ENCODE measurements at regions of chr11 and their contacts with region 1.

Region 1: DNA sequence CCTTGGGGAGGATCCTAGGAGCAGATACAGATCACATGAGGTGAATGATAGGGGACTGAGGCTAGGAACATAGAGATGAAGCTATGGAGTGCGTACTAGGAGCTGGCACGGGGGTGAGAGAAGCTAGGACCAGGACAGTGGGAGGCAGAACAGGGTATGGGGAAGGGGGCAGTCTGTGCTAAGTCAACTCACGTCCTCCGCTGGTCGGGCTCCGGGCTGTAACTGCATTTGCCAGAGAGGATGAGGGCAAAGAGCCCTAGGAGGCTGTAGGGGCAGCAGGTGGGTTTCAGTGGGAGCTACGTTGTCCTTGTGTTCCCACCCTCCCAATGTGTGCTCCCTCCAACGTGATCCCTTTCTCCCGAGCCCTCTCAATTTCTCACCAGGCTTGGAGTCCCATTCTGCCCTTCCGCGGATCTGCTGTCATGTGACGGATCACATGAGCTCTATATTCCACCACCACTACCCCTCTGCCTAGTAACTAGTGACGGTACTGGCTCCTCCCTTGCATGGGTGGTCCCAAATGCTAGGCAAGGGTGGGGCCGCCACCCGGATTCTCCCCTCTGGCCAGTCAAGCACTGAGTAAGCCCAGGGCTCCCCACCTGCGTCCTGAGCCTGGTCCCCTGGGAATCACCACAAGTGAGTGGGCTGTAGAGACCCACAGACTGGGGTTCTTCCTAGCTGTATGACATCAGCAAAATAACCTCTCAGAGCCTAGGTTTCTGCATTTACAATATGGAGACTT is at the start of gene TPP1:
- DNase-seq: peak; percentile 89 to 95 (median 90)
- H3K4me3 ChIP-seq: peak within 1 kb of the TSS; percentile 68
- H3K27ac ChIP-seq: peak within 1 kb of the TSS; percentile 54 to 55
- H3K4me1 ChIP-seq: peaks cover 4% of the 10 kb centered on the region
- H3K27me3 ChIP-seq: no peaks in the 10 kb centered on the region
- CTCF ChIP-seq: no peak
- EP300 ChIP-seq: no peak
- POLR2A ChIP-seq: peak; percentile 47
- total RNA-seq, gene TPP1: 21.0 to 71.8 (median 58.2) TPM

Region 2: DNA sequence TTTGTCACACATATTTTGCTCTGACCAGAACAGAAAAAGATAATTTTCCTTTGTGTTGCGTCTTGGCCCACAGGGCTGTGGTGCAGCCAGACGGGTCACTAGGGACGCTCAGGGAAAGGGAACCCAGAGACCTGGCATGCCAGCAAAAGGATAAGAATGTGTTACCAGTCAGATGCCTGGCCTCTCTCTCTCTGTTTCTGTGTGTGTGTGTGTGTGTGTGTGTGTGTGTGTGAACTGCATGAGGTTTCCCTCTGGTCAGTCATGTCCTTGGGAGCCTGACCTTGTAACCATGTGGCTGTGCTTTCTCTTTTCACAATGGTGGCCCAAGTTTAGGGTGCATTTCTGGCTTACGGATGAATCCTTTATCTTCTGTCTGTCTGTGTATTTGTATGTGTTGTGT is 334.2 kb before region 1 on chr11:
- intact Hi-C with region 1: no loop called
- DNase-seq: no peak
- H3K4me3 ChIP-seq: no peak overlapping the region
- H3K27ac ChIP-seq: no peak overlapping the region
- H3K4me1 ChIP-seq: no peaks in the 10 kb centered on the region
- H3K27me3 ChIP-seq: no peaks in the 10 kb centered on the region
- CTCF ChIP-seq: no peak
- EP300 ChIP-seq: no peak
- POLR2A ChIP-seq: no peak

Region 3: DNA sequence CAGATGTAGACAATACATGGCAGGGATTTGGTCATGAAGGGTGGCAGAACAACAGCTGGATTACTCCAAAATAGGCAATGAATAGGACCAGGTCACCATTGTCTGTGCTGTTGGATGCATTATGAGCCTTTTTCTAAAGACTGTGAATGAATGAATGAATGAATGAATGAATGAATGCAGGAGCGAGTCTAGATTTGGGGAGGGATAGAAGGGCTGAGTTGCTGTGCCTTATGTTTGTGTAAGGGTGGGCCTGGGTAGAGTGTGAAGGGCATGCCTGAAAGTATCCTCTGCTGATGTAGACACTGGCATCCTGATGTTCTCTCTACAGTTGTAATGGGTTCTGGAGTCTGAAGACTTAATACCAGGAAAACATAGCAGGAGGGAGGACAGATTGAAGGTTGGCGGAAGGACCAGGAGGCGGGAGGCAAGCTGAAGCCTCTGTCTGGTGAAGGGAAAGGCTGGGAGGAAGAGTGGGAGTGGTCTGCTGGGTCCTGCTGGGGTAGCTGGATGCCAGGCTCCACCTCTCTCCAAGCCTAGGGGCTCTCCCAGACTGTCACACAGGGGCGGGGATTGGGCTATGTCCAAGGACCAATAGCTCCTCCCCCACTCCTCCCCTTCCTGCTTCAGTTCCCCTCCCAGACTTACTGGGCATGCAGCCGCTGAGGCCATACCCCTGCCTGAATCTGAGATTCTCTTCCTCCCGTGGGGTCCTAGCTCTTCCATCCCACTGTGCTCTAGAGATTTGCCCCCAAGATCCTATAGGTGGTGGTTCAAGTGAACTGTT is 150.3 kb before region 1 on chr11:
- intact Hi-C with region 1: no loop called
- DNase-seq: peak; percentile 82 to 94 (median 91)
- H3K4me3 ChIP-seq: no peak overlapping the region
- H3K27ac ChIP-seq: peak overlapping the region in 1 of 2 donors; percentile 54
- H3K4me1 ChIP-seq: peaks cover 7% of the 10 kb centered on the region
- H3K27me3 ChIP-seq: no peaks in the 10 kb centered on the region
- CTCF ChIP-seq: no peak
- EP300 ChIP-seq: no peak
- POLR2A ChIP-seq: no peak

Region 4: DNA sequence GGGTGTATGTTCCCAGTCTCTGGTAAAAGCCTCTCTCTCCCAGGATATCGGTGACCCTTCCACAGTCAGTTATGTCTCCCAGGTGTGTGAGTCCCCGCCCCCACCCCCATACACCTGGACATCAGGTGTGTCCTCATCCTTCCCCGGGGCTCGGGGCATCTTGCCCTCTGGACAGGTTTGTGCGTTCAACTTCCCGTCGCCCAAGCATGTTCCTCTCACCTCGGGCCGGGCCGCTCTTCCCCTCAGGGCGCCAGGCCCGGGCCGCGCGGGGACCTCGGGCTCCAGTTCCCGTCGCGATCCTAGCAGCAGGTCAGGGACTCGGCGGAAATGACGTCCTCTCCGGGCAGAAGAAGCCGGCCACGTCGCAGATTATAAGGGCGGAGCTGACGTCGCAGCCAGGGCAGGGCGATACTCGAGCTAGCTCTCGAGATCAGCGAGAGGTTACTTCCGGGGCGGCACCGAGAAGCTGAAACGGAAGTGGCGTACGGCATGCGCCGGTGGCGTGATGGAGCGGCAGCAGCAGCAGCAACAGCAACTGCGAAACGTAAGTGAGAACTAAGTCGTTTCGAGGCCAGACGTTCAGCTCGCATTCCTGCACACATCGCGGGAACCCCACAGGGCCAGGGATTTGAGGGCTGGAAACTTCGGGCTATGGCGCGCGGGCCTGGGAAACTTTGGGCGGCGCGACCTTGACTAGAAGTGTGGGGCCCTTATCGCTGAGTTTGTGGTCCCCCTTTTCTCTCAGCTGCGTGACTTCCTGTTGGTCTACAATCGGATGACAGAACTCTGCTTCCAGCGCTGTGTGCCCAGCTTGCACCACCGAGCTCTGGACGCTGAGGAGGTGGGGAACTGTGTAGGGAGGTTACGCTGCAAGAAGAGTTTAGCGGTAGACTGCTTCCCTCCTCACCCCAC is 137.9 kb before region 1 on chr11 and contains the starts of genes ARFIP2 and TIMM10B:
- intact Hi-C with region 1: loop called in 1 of 4 experiments (anchors 5 kb)
- DNase-seq: peak; percentile 97 to 98 (median 98)
- H3K4me3 ChIP-seq: peak within 1 kb of the TSS; percentile 67
- H3K27ac ChIP-seq: peak within 1 kb of the TSS; percentile 63 to 90
- H3K4me1 ChIP-seq: peaks cover 9% of the 10 kb centered on the region
- H3K27me3 ChIP-seq: no peaks in the 10 kb centered on the region
- CTCF ChIP-seq: no peak
- EP300 ChIP-seq: peak; percentile 13
- POLR2A ChIP-seq: peak; percentile 93
- total RNA-seq, gene ARFIP2: 43.6 to 70.4 (median 49.5) TPM
- total RNA-seq, gene TIMM10B: 21.8 to 64.7 (median 38.4) TPM

Region 5: DNA sequence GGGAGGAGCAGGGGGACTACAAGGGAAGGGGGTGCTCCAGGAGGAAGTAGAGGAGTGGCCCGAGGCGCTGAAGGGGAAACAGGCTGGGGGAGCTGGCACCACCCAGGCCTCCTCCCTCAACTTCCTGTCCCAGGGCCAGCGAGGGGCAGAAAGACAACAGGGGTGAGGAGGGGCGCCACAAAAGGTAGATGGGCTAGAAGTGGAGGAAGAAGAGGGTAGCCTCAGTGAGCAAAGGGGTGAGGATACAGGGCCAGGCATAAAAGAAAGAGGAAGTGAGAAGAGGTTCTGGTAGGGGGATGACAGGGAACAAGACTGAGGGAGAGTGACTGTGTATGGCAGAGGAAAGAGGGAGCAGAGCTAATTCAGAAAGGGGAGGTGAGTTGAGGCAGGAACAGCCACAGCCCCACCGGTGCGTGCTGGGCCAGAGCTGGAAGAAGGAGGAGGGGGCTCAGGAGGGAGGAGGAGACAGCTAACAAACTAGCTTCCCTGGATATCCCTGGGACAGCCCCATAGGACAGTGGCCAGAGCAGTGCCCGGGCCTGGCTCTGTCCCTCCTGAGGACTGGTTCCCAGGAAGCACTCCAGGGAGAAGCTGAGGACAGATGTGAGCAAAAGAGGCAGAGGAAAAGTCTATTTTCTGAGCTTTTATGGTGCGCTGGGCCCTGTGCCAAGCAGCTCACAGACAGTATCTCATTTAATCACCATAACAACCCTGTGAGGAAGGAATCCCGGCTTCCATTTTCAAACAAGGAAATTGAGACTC is 27.9 kb after region 1 on chr11:
- intact Hi-C with region 1: no loop called
- DNase-seq: no peak
- H3K4me3 ChIP-seq: peak overlapping the region; percentile 11
- H3K27ac ChIP-seq: peak overlapping the region in 1 of 2 donors; percentile 8
- H3K4me1 ChIP-seq: peaks cover 17% of the 10 kb centered on the region
- H3K27me3 ChIP-seq: no peaks in the 10 kb centered on the region
- CTCF ChIP-seq: no peak
- EP300 ChIP-seq: no peak
- POLR2A ChIP-seq: no peak

Region 6: GRCh38 chr11:6727971-6728760 is 109.0 kb after region 1 on chr11:
- intact Hi-C with region 1: no loop called
- DNase-seq: no peak
- H3K4me3 ChIP-seq: no peak overlapping the region
- H3K27ac ChIP-seq: no peak overlapping the region
- H3K4me1 ChIP-seq: no peaks in the 10 kb centered on the region
- H3K27me3 ChIP-seq: no peaks in the 10 kb centered on the region
- CTCF ChIP-seq: no peak
- EP300 ChIP-seq: no peak
- POLR2A ChIP-seq: no peak